Dendritic cell treated with granulocyte-macrophage colony-stimulating factor and Interleukin-4, amounts not matched to agents 40 ng/mL and 50 ng/mL, for 4 days (primary cell): ENCODE measurements at regions of chr1 and their contacts with region 1.

Region 1: DNA sequence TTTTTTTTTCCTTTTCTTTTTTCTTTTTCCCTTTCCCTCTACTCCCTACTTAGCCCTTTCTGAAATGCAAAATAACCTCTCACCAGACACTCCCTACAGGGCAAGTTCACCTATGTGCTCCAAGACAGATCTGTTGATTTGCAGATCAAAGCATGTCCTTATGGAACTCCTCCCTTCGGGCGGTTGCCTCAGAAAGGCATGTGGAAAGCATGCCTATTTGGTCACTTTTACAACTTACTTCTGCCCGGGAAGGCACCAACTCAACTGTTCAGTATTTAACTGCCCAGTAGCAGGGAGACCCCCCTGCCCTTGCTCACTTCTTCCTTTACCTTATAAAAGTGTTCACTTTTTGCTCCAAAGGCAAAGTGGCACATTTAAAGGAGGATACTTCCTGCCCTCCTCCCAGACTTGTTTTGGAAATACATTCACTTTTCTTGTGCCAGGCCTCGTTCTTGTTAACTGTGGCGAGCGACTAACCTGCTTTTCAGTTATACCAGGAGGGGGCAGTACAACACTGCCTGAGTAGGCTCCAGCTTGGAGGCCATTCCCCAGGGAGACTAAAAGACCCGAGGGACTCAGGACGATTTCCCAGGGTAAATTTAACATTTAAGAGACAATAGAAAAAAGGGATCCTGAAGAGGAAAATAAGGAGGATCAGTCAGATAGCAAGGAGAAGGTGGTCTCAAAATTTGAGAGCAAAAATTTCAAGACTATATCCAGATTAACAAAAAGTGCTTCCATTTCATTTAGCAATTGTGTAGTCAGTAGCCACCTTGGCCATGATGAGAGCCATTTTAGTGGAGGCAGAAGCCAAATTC is 12.3 kb upstream of the SLAMF7 start:
- H3K4me3 Mint-ChIP-seq: no peak overlapping the region
- H3K27ac Mint-ChIP-seq: no peak overlapping the region
- H3K4me1 Mint-ChIP-seq: peaks cover 22% of the 10 kb centered on the region
- H3K27me3 Mint-ChIP-seq: no peaks in the 10 kb centered on the region

Region 2: DNA sequence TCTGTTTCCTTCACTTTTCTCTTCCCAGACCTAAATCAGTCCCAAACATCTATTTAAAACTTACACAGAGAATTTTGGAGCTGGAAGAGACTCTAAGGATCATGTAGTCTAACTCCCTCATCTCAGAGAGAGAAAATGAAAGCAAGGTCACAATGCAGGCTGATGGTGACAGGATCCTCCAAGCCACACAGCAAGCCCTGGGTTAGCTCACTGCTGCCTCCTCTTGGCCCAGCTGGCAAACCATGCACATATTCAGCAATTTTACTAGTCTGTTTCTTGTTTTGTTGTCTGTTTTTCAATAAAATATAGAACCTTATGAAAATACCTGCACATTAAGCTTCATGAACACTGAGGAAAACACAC is 41.6 kb after region 1 on chr1:
- intact Hi-C with region 1: loop called (anchors 1 kb)
- H3K4me3 Mint-ChIP-seq: no peak overlapping the region
- H3K27ac Mint-ChIP-seq: peak overlapping the region; percentile 70
- H3K4me1 Mint-ChIP-seq: peaks cover 22% of the 10 kb centered on the region
- H3K27me3 Mint-ChIP-seq: peaks cover 2% of the 10 kb centered on the region